ENCODE measurements at regions of chr10 and their contacts with region 1.

Region 1: DNA sequence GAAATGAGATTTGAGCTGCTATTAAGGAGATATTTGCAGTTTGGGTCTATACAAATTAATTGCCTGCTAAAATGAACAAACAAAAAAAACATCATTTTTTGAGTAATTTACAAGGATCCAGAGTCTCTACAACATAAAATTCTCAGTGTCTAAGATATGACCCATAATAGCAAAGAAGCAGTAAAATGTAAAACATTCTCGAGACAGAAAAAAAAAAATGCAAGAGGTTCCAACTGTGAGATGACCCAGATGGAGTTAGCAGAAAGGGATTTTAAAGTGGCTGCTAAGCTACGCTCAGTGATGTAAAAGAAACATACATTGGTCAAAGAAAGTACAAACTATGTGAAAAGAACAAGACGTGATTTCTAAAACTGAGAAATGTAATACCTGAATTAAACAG is 471.0 kb downstream of the SH2D4B start:
- DNase-seq: no peak
- ATAC-seq: no peak
- H3K4me3 Mint-ChIP-seq: no peak overlapping the region
- H3K27ac Mint-ChIP-seq: no peak overlapping the region
- H3K4me1 Mint-ChIP-seq: peaks cover 5% of the 10 kb centered on the region; the same call in 1 of the 2 replicates
- H3K27me3 Mint-ChIP-seq: no peaks in the 10 kb centered on the region
- CTCF ChIP-seq: no peak

Region 2: GRCh38 chr10:81018708-81019365 is 10.1 kb after region 1 on chr10:
- CTCF ChIA-PET with region 1: interaction called, 17 read pairs
- POLR2A ChIA-PET with region 1: no interaction called
- DNase-seq: peak; percentile 51
- ATAC-seq: peak; percentile 93; the same call in 1 of the 2 replicates
- H3K4me3 Mint-ChIP-seq: no peak overlapping the region
- H3K27ac Mint-ChIP-seq: no peak overlapping the region
- H3K4me1 Mint-ChIP-seq: peaks cover 4% of the 10 kb centered on the region
- H3K27me3 Mint-ChIP-seq: no peaks in the 10 kb centered on the region
- CTCF ChIP-seq: peak; percentile 48